ENCODE measurements at regions of chr1 and their contacts with region 1.

Region 1: GRCh38 chr1:232553050-232553754 is 76.7 kb downstream of the SIPA1L2 start:
- DNase-seq: no peak
- H3K4me3 ChIP-seq: no peak overlapping the region
- H3K4me3 Mint-ChIP-seq: no peak overlapping the region
- H3K27ac Mint-ChIP-seq: peak overlapping the region; percentile 76
- H3K4me1 ChIP-seq: peaks cover 55% of the 10 kb centered on the region
- H3K4me1 Mint-ChIP-seq: peaks cover 63% of the 10 kb centered on the region
- H3K27me3 ChIP-seq: no peaks in the 10 kb centered on the region
- H3K27me3 Mint-ChIP-seq: no peaks in the 10 kb centered on the region
- CTCF ChIP-seq: no peak

Region 2: DNA sequence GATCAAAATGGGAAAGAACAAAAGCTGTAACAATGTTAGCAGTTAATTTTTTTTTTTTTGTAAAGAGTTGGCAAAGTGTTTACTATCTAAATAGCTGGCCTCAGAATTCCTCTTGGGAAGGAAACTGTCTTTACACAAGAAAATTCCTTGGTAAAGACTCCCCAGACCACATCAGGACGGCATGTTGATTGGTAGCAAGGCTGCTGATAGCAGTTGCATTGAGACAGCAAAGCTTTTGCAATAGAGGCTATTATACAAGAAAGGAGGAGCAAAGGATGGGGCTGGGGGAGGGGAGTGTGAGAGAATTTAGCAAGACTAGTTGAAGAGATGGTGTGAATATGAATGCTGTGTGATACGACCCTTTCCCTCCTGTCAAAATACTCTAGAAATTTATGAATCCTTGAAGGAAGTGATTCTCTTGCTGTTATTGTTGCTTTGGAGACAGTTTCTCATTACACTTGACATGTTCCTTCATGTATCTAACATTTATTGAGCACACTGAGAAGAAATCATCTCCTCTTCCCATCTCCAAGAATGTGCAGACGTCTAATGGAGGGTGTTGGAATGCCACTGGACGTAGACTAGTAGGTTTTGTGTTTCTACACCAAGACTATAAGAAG is 278.9 kb before region 1 on chr1:
- CTCF ChIA-PET with region 1: no interaction called
- POLR2A ChIA-PET with region 1: no interaction called
- intact Hi-C with region 1: loop called (anchors 1 kb)
- DNase-seq: peak in 1 of 2 experiments; percentile 50
- H3K4me3 ChIP-seq: no peak overlapping the region
- H3K4me3 Mint-ChIP-seq: no peak overlapping the region
- H3K27ac Mint-ChIP-seq: no peak overlapping the region
- H3K4me1 ChIP-seq: peaks cover 10% of the 10 kb centered on the region; the same call in 1 of the 2 replicates
- H3K4me1 Mint-ChIP-seq: peaks cover 14% of the 10 kb centered on the region
- H3K27me3 ChIP-seq: no peaks in the 10 kb centered on the region
- H3K27me3 Mint-ChIP-seq: no peaks in the 10 kb centered on the region
- CTCF ChIP-seq: no peak

Region 3: DNA sequence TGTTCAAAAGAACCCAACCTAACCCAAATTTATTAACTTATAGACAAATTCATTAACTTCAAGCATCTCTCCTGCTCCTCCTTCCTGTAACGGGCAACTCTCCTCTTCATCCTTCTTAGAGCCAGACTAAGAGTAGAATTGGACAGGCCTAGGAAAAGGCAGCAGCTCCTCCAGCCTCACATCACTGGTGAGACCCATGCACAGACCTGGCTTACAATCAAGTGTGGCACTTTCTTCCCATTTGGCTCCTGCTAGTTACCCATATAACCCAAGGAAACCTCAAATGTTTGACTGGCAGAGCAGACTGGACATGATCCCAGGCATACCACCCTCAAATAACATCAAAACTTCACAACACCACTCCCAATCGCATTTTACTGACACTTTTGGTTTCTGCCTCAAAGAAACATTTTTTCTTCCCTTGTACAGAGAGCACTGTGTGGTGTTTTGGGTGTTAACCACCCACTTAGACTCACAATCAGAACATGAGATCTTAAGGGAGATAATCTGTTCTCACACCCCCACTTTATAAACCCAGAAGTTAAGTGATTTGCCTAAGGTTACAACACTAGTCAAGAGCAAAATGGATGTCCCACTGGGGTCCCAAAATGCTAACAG is 24.6 kb before region 1 on chr1:
- CTCF ChIA-PET with region 1: no interaction called
- POLR2A ChIA-PET with region 1: no interaction called
- intact Hi-C with region 1: loop called (anchors 1 kb)
- DNase-seq: no peak
- H3K4me3 ChIP-seq: no peak overlapping the region
- H3K4me3 Mint-ChIP-seq: no peak overlapping the region
- H3K27ac Mint-ChIP-seq: peak overlapping the region; percentile 42
- H3K4me1 ChIP-seq: peaks cover 30% of the 10 kb centered on the region
- H3K4me1 Mint-ChIP-seq: peaks cover 27% of the 10 kb centered on the region
- H3K27me3 ChIP-seq: no peaks in the 10 kb centered on the region
- H3K27me3 Mint-ChIP-seq: no peaks in the 10 kb centered on the region
- CTCF ChIP-seq: no peak

Measured in Caco-2 (cell line).